Heart right ventricle (tissue), 16 donors: ENCODE measurements at regions of chr9 and their contacts with region 1.

Region 1: GRCh38 chr9:503881-504852 is 289.5 kb downstream of the DOCK8 start:
- DNase-seq: peak; percentile 47 to 82
- ATAC-seq: peak; percentile 80 to 91 (median 89)
- H3K4me3 ChIP-seq: peak within 1 kb of the TSS; percentile 60 to 77 (median 72)
- H3K27ac ChIP-seq: peak within 1 kb of the TSS; percentile 68 to 95 (median 86)
- H3K4me1 ChIP-seq: peaks cover 0 to 29% (median 21%) of the 10 kb centered on the region in 9 donors
- H3K27me3 ChIP-seq: peaks cover 0 to 49% (median 0%) of the 10 kb centered on the region in 7 donors
- CTCF ChIP-seq: peak in 7 of 9 donors; percentile 16 to 61 (median 41)

Region 2: GRCh38 chr9:406886-407654 is 97.1 kb before region 1 on chr9:
- intact Hi-C with region 1: loop called in 2 of 10 experiments (anchors 10 kb)
- DNase-seq: peak in 1 of 2 donors; percentile 20
- ATAC-seq: peak; percentile 61 to 91 (median 83)
- H3K4me3 ChIP-seq: no peak overlapping the region
- H3K27ac ChIP-seq: no peak overlapping the region
- H3K4me1 ChIP-seq: no peaks in the 10 kb centered on the region
- H3K27me3 ChIP-seq: no peaks in the 10 kb centered on the region
- CTCF ChIP-seq: peak in 7 of 9 donors; percentile 29 to 59 (median 54)

Region 3: GRCh38 chr9:546797-547223 is 42.6 kb after region 1 on chr9:
- intact Hi-C with region 1: loop called in 2 of 10 experiments (anchors 1 to 5 kb)
- DNase-seq: peak in 1 of 2 donors; percentile 31
- ATAC-seq: peak; percentile 62 to 83 (median 77)
- H3K4me3 ChIP-seq: peak overlapping the region in 5 of 10 donors; percentile 23 to 34 (median 31)
- H3K27ac ChIP-seq: peak overlapping the region; percentile 8 to 80 (median 70)
- H3K4me1 ChIP-seq: peaks cover 0 to 64% (median 41%) of the 10 kb centered on the region in 9 donors
- H3K27me3 ChIP-seq: no peaks in the 10 kb centered on the region
- CTCF ChIP-seq: peak in 8 of 9 donors; percentile 30 to 65 (median 42)

Region 4: GRCh38 chr9:551986-552929 is 48.1 kb after region 1 on chr9:
- intact Hi-C with region 1: loop called in 2 of 10 experiments (anchors 1 to 5 kb)
- DNase-seq: no peak
- ATAC-seq: peak in 4 of 8 donors; percentile 20 to 31 (median 23)
- H3K4me3 ChIP-seq: no peak overlapping the region
- H3K27ac ChIP-seq: peak overlapping the region in 7 of 10 donors; percentile 17 to 51 (median 28)
- H3K4me1 ChIP-seq: peaks cover 0 to 52% (median 27%) of the 10 kb centered on the region in 9 donors
- H3K27me3 ChIP-seq: peaks cover 0 to 3% (median 0%) of the 10 kb centered on the region in 7 donors
- CTCF ChIP-seq: no peak

Region 5: DNA sequence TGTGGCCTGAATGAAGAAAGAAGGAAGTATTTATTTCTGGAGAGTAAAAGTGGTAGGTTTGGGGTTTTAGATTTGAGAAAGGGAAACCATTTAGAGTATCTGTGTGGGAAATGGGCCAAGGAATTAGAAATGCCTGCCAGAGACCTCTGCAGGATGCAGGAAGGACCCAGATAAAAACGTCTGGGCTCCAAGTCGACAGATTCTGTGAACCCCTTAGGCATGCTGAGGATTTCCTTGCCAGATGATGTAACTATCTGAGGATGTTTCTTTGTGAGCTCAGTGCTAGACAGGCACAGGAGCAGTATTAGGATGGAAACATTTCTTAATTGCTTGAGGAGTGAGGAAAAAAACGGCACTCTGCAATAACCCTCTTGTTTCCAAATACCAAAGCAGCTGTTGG is 85.6 kb after region 1 on chr9:
- intact Hi-C with region 1: loop called in 1 of 10 experiments (anchors 10 kb)
- DNase-seq: no peak
- ATAC-seq: peak in 7 of 8 donors; percentile 11 to 75 (median 36)
- H3K4me3 ChIP-seq: no peak overlapping the region
- H3K27ac ChIP-seq: peak overlapping the region; percentile 7 to 86 (median 74)
- H3K4me1 ChIP-seq: peaks cover 8 to 78% (median 36%) of the 10 kb centered on the region in 9 donors
- H3K27me3 ChIP-seq: no peaks in the 10 kb centered on the region
- CTCF ChIP-seq: no peak